ENCODE measurements at regions of chr1 and their contacts with region 1.

Region 1: GRCh38 chr1:161045750-161046571 is at the start of gene USF1:
- DNase-seq: peak; percentile 96
- ATAC-seq: peak; percentile 68
- H3K4me3 Mint-ChIP-seq: peak within 1 kb of the TSS; percentile 85
- H3K27ac Mint-ChIP-seq: peak within 1 kb of the TSS; percentile 99
- H3K4me1 Mint-ChIP-seq: peaks cover 49% of the 10 kb centered on the region
- H3K27me3 Mint-ChIP-seq: no peaks in the 10 kb centered on the region
- total RNA-seq, gene USF1: 81.6 to 83.2 TPM

Region 2: DNA sequence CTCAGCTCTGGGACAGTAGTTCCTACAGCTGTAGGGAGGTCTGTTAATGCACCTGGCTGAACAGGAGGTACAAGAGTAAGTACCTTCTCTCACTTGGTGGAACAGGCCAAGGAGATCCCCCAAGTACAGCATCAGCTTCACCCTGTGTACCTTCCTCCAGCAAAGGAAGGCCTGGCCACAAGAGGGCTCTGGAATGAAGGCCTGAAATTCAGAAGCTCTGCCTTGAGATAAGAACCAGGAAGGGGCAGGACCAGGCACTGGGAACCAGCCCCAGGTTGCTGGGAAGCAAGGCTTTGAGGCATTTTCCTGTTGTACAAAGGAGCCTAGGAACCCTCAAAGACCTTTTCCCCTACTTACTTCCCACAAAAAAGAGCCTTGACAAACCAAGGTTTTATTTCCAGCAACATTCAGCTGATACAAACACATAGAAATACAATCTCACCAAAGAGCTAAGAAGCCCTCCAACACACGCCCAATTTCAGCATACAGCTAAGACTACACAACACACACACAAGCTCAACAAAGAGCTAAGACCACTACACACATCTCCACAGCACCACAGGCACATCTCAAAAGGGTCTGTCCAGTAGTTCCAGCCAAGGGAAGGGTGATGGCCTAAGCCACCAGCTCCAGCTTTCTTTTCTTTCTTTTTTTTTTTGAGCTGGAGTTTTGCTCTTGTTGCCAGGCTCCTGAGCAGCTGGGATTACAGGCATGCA is 48.5 kb before region 1 on chr1:
- CTCF ChIA-PET with region 1: interaction called, 34 read pairs
- POLR2A ChIA-PET with region 1: interaction called, 5 read pairs
- DNase-seq: peak; percentile 68
- ATAC-seq: peak; percentile 84
- H3K4me3 Mint-ChIP-seq: no peak overlapping the region
- H3K27ac Mint-ChIP-seq: no peak overlapping the region
- H3K4me1 Mint-ChIP-seq: no peaks in the 10 kb centered on the region
- H3K27me3 Mint-ChIP-seq: no peaks in the 10 kb centered on the region

Region 3: DNA sequence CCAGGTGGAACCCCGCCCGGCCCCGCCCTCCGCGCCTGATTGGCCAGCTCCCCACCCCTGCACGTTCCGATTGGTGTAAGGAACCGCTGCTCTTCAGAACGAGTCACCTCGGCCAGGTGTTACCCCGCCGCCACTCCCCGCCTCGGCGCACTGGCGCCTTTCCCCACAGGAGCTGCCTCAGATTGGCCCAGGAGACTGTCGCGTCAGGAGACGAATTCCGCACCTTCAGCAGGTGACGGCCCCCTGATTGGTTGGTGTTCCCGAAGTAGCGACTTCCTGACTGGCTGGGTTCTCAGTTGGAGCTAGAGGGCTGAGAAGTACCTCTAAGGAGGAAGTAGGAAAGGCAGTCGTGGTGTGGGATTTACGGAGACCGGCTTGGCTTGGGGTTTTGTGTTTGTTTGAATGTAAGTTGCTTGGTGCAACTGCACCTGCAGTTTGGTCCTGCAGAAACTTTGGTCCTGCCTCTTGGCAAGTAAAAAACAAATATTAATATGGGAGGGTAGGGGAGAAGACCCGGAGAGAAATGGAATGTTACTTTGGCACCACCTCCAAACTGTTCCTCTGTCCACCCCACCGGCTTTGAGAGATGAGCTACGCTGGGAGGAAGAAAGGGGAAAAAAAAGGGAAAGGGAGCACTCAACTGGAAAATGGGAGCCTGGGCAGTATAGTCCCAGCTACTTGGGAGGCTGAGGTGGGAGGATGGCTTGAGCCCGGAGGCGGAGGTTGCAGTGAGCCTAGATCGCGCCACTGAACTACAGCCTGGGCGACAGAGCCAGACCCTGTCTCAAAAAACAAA is 24.6 kb before region 1 on chr1:
- CTCF ChIA-PET with region 1: interaction called, 6 read pairs
- POLR2A ChIA-PET with region 1: interaction called, 28 read pairs
- DNase-seq: peak; percentile 90
- ATAC-seq: peak; percentile 95
- H3K4me3 Mint-ChIP-seq: peak overlapping the region; percentile 87
- H3K27ac Mint-ChIP-seq: peak overlapping the region; percentile 79
- H3K4me1 Mint-ChIP-seq: peaks cover 43% of the 10 kb centered on the region
- H3K27me3 Mint-ChIP-seq: peaks cover 2% of the 10 kb centered on the region

Region 4: GRCh38 chr1:161092621-161093028 is 46.7 kb after region 1 on chr1:
- CTCF ChIA-PET with region 1: interaction called, 52 read pairs
- POLR2A ChIA-PET with region 1: interaction called, 20 read pairs
- DNase-seq: no peak
- ATAC-seq: peak; percentile 33
- H3K4me3 Mint-ChIP-seq: no peak overlapping the region
- H3K27ac Mint-ChIP-seq: peak overlapping the region; percentile 27
- H3K4me1 Mint-ChIP-seq: peaks cover 46% of the 10 kb centered on the region
- H3K27me3 Mint-ChIP-seq: peaks cover 2% of the 10 kb centered on the region

Region 5: DNA sequence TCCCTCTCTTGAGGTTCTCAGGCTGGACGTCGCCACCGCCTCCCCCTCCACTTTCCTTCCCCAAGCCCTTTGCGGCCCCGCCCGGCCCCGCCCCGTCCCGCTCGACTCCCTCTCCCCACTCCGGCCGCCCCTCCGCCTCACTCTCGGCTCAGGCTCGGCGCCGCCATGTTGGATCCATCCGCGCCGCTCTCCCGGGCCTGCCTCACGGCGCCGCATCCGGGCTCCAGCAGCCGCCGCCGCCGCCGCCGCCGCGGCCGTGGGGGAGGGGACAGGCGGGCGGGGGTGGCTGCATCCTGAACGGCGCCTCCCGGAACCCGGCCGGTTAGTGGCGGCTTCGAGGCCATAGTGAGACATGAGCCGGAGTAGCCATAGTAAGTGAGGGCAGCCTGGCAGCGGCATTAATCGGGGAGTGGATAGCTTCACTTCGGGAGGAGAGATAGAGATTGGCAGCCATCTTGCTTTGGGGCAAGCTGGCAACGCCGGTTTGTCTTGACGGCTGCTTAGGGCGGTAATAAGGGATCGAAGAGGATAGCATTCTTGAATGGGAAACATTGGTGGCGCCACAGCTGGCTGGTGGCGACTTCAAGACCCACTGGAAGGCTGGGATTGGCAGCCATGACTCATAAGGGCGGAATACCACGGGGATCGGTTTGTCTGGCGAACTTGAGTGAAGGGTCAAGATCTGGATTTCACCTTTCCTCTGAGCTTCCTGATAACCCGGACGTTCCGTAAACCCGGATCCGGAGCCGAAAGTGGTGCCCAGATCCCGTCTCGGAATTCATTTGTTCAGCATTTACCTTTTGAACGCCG is 86.7 kb after region 1 on chr1 and contains the start of gene DEDD:
- CTCF ChIA-PET with region 1: interaction called, 3 read pairs
- POLR2A ChIA-PET with region 1: interaction called, 10 read pairs
- DNase-seq: peak; percentile 93
- ATAC-seq: peak; percentile 96
- H3K4me3 Mint-ChIP-seq: no peak within 1 kb of the TSS
- H3K27ac Mint-ChIP-seq: no peak within 1 kb of the TSS
- H3K4me1 Mint-ChIP-seq: peaks cover 45% of the 10 kb centered on the region
- H3K27me3 Mint-ChIP-seq: no peaks in the 10 kb centered on the region
- total RNA-seq, gene DEDD: 34.5 to 36.3 TPM